Naive thymus-derived CD4-positive, alpha-beta T cell (primary cell): ENCODE measurements at regions of chr2 and their contacts with region 1.

Region 1: GRCh38 chr2:143078104-143078503 is 51.1 kb upstream of the ARHGAP15 start:
- DNase-seq: peak in 1 of 9 donors; percentile 9
- ATAC-seq: no peak
- H3K4me3 ChIP-seq: no peak overlapping the region
- H3K4me3 Mint-ChIP-seq: no peak overlapping the region
- H3K27ac ChIP-seq: no peak overlapping the region
- H3K27ac Mint-ChIP-seq: no peak overlapping the region
- H3K4me1 ChIP-seq: no peaks in the 10 kb centered on the region
- H3K4me1 Mint-ChIP-seq: no peaks in the 10 kb centered on the region
- H3K27me3 ChIP-seq: no peaks in the 10 kb centered on the region
- H3K27me3 Mint-ChIP-seq: no peaks in the 10 kb centered on the region

Region 2: GRCh38 chr2:143140864-143141661 is 63.0 kb after region 1 on chr2:
- CTCF ChIA-PET with region 1: no interaction called
- POLR2A ChIA-PET with region 1: no interaction called
- intact Hi-C with region 1: no loop called
- DNase-seq: no peak
- ATAC-seq: peak; percentile 61
- H3K4me3 ChIP-seq: no peak overlapping the region
- H3K4me3 Mint-ChIP-seq: peak overlapping the region; percentile 27 to 84 (median 78)
- H3K27ac ChIP-seq: peak overlapping the region; percentile 25
- H3K27ac Mint-ChIP-seq: peak overlapping the region in 8 of 9 donors; percentile 34 to 86 (median 82)
- H3K4me1 ChIP-seq: peaks cover 46 to 48% of the 10 kb centered on the region in 2 donors
- H3K4me1 Mint-ChIP-seq: peaks cover 80 to 100% (median 96%) of the 10 kb centered on the region in 7 donors
- H3K27me3 ChIP-seq: no peaks in the 10 kb centered on the region
- H3K27me3 Mint-ChIP-seq: no peaks in the 10 kb centered on the region

Region 3: GRCh38 chr2:143217512-143218115 is 139.5 kb after region 1 on chr2:
- CTCF ChIA-PET with region 1: interaction called, 3 read pairs
- POLR2A ChIA-PET with region 1: no interaction called
- intact Hi-C with region 1: loop called in 1 of 2 experiments (anchors 1 kb)
- DNase-seq: no peak
- ATAC-seq: peak; percentile 75
- H3K4me3 ChIP-seq: no peak overlapping the region
- H3K4me3 Mint-ChIP-seq: peak overlapping the region in 3 of 10 donors; percentile 10 to 31 (median 25)
- H3K27ac ChIP-seq: no peak overlapping the region
- H3K27ac Mint-ChIP-seq: peak overlapping the region; percentile 17 to 85 (median 53)
- H3K4me1 ChIP-seq: peaks cover 4 to 5% of the 10 kb centered on the region in 2 donors
- H3K4me1 Mint-ChIP-seq: peaks cover 29 to 81% (median 67%) of the 10 kb centered on the region in 7 donors
- H3K27me3 ChIP-seq: no peaks in the 10 kb centered on the region
- H3K27me3 Mint-ChIP-seq: no peaks in the 10 kb centered on the region